Activated CD4-positive, alpha-beta T cell treated with anti-CD3 and anti-CD28 coated beads, Interleukin-2, amount 10 ng/mL, durations not matched to agents 7 days and 5 days (primary cell): ENCODE measurements at regions of chr1 and their contacts with region 1.

Region 1: GRCh38 chr1:8015036-8015808 is 10.9 kb downstream of the ERRFI1 start:
- DNase-seq: peak; percentile 68
- H3K4me3 Mint-ChIP-seq: no peak overlapping the region
- H3K27ac Mint-ChIP-seq: no peak overlapping the region
- H3K4me1 Mint-ChIP-seq: no peaks in the 10 kb centered on the region
- H3K27me3 Mint-ChIP-seq: peaks cover 22% of the 10 kb centered on the region

Region 2: GRCh38 chr1:7902478-7903085 is 112.6 kb before region 1 on chr1:
- CTCF ChIA-PET with region 1: no interaction called
- POLR2A ChIA-PET with region 1: no interaction called
- DNase-seq: peak; percentile 70
- H3K4me3 Mint-ChIP-seq: no peak overlapping the region
- H3K27ac Mint-ChIP-seq: no peak overlapping the region
- H3K4me1 Mint-ChIP-seq: peaks cover 6% of the 10 kb centered on the region
- H3K27me3 Mint-ChIP-seq: no peaks in the 10 kb centered on the region

Region 3: GRCh38 chr1:7912743-7913557 is 102.3 kb before region 1 on chr1:
- CTCF ChIA-PET with region 1: no interaction called
- POLR2A ChIA-PET with region 1: no interaction called
- DNase-seq: no peak
- H3K4me3 Mint-ChIP-seq: peak overlapping the region; percentile 16
- H3K27ac Mint-ChIP-seq: no peak overlapping the region
- H3K4me1 Mint-ChIP-seq: peaks cover 8% of the 10 kb centered on the region
- H3K27me3 Mint-ChIP-seq: no peaks in the 10 kb centered on the region

Region 4: DNA sequence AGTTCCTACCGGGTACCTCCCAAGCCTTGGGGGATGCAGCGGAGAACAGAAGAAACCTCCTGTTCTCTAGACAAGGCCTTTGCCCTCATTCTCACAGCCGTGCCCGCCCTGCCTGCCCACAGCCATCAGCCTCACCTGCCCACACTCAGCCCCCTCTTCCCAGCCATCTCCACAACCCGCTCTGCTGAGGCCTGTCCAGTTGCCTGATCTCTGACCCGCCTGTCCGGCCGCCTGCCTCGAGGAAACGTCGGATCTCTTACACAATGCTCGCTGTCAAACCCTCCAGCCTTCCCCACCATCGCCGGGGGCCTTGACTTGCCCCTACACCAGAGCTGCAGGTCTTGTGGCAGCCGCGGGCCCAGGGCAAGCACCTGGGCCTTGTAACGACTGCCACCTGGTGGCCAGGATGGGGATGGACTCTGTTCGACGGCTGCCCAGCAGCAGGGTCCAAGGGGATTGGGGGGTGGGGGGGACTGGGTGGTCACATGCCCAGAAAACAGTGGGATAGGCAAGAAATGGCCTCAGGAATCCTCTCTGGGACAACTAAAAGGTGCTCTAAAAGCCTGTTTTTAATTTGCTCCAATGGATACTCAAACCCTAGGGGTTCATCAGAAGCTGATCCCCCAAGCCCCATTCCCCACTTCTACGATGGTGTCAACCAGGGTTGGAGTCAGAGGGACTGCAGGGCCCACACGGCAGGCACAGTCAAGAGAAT is 333.7 kb after region 1 on chr1:
- CTCF ChIA-PET with region 1: interaction called, 10 read pairs
- POLR2A ChIA-PET with region 1: no interaction called
- DNase-seq: peak; percentile 73
- H3K4me3 Mint-ChIP-seq: no peak overlapping the region
- H3K27ac Mint-ChIP-seq: no peak overlapping the region
- H3K4me1 Mint-ChIP-seq: peaks cover 2% of the 10 kb centered on the region
- H3K27me3 Mint-ChIP-seq: no peaks in the 10 kb centered on the region